Activated B cell treated with CpG ODN at 0.5 μM for 24 hours (primary cell): ENCODE measurements at regions of chr1 and their contacts with region 1.

Region 1: GRCh38 chr1:235866913-235867845 is 473 bp upstream of the LYST start:
- DNase-seq: peak; percentile 99
- ATAC-seq: peak; percentile 71
- H3K4me3 Mint-ChIP-seq: peak overlapping the region; percentile 98
- H3K27ac Mint-ChIP-seq: peak overlapping the region; percentile 99
- H3K4me1 Mint-ChIP-seq: peaks cover 64% of the 10 kb centered on the region
- H3K27me3 Mint-ChIP-seq: no peaks in the 10 kb centered on the region
- CTCF ChIP-seq: no peak

Region 2: DNA sequence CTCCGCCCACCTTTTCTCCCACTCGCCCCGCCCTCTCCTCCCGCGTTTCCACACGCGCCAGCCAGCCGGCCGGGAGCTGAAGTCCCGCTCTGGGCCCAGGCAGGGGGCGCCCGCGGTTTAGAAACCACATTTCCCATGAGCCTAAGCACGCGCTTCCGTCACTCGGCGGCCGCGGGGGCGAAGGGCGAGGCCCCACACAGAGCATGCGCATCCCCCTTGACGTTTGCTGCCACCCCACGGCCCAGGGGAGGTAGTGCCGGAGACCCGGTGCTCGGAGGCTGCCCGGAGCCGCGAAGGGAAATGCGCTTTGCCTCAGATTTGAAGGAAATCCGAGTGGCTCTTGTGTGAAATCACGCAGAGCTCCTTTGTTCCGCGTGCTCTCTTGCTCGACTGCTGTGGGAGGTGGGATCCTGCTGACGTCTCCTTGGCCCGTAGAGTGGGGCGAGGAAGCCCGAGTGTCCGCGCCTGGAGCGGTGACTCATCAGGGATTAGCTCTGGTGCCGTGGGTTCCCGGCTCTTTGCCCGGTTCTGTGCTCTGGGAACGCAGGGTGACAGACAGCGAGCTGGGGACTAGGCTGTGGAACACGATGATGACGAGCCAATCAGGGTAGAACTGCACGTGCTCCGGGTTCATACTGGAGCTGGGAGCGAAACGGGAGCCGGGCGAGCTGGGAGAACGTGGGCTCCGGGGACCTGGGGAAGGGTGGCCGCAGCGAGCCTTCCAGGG is 362.5 kb before region 1 on chr1:
- CTCF ChIA-PET with region 1: no interaction called
- POLR2A ChIA-PET with region 1: interaction called, 4 read pairs
- intact Hi-C with region 1: loop called (anchors 1 kb)
- DNase-seq: peak; percentile 96
- ATAC-seq: peak; percentile 81
- H3K4me3 Mint-ChIP-seq: peak overlapping the region; percentile 96
- H3K27ac Mint-ChIP-seq: peak overlapping the region; percentile 95
- H3K4me1 Mint-ChIP-seq: peaks cover 20% of the 10 kb centered on the region
- H3K27me3 Mint-ChIP-seq: no peaks in the 10 kb centered on the region
- CTCF ChIP-seq: no peak

Region 3: DNA sequence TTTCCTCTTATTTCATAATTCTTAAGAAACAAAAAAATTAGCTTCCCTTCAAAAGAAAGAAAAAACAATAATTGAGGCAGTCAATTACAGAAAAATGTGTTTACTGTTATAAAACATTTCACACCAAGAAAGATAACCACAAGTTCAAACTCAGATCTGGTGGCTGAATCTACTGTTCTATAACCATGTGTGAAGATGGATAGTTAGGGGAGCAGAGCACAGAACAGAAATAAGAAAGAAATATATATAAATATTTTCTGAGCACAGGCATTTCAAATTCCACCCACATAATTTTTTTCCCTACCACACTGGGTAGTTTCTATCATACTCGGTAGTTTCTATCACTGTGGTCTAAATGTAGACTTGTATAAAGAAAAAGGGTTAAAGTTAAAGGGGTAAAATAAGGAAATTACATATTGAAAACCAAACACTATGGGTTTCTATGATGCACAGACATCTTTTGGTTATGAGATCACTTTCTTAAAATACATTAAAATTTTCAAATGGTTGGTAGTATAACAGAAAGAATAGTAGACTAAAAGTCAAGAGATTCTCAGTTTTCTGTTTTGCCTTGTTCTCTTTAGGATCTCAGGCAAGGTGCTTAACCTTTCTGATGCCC is 11.3 kb before region 1 on chr1:
- CTCF ChIA-PET with region 1: interaction called, 7 read pairs
- POLR2A ChIA-PET with region 1: interaction called, 23 read pairs
- intact Hi-C with region 1: loop called (anchors 1 kb)
- DNase-seq: no peak
- ATAC-seq: peak; percentile 40
- H3K4me3 Mint-ChIP-seq: no peak overlapping the region
- H3K27ac Mint-ChIP-seq: peak overlapping the region; percentile 54
- H3K4me1 Mint-ChIP-seq: peaks cover 56% of the 10 kb centered on the region
- H3K27me3 Mint-ChIP-seq: no peaks in the 10 kb centered on the region
- CTCF ChIP-seq: no peak

Region 4: DNA sequence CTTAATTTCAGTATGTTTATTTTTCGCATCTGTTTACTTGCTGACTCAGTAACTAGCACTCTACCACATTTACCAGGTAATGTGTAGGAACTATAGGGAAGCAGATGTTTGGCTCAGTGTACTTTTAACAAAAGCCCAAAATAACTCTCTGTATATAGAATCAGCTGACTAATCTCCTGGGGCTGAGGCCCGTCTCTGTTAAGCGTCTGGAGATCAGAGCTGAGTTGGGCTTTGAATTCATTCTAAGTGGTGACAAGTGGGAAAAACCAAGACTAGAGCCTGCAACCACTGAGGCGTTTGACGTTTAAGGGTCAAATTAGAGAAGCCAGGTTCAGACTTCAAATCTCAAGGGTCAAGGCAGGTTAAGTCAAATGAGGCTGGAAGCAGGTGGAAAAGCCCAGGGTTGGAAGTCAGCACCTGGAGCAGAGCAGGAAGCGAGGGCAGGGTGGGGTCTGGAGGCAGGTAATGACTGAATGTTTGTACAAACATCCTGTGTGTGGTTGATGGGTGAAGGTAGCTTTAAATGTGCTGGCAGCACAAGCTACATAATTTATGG is 56.4 kb after region 1 on chr1:
- CTCF ChIA-PET with region 1: interaction called, 6 read pairs
- POLR2A ChIA-PET with region 1: interaction called, 50 read pairs
- intact Hi-C with region 1: loop called (anchors 1 kb)
- DNase-seq: no peak
- ATAC-seq: peak; percentile 85
- H3K4me3 Mint-ChIP-seq: peak overlapping the region; percentile 56
- H3K27ac Mint-ChIP-seq: peak overlapping the region; percentile 78
- H3K4me1 Mint-ChIP-seq: peaks cover 59% of the 10 kb centered on the region
- H3K27me3 Mint-ChIP-seq: no peaks in the 10 kb centered on the region
- CTCF ChIP-seq: no peak

Region 5: DNA sequence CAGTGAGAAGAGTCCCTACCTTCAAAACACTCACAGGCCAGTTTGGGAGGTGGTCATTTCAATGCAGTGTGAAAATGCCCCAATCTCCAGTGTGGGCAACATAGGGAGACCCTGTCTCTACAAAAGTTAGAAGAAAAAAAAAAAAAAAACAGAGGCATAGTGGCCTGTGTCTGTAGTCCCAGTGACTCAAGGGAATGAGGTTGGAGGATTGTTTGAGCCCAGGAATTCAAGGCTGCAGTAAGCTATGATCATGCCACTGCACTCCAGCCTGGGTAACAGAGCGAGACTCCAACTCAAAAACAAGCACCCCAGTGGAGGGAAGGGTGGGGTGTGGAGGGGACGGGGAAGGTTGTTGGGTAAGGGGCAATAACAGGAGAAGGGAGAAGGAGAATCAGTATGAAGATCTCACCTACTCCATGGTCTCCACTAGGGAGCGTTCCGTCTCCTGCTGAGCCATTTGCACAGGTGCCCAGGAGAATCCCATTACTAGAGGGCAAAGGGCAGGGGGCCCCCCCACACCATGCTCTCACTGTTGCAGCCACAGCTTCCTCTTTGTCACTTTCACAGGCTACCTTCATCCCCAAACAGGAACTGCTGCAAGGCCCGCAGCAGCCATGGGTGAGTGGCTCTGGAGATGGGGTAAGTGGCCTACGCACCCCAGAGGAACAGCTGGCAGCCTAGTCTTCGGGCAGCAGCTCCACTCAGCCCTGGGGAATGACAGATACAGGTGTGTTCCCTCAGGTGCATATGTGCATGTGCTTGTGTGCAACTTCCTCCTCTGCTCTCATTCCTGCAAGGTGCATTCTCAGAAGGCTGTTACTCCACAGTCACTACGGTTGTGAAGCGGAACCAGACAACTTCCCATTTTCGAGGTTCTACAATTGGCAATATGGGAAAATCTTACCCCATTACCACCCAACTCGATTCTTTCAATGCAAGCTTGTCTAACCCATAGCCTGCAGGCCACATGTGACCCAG is 87.4 kb after region 1 on chr1:
- CTCF ChIA-PET with region 1: interaction called, 5 read pairs
- POLR2A ChIA-PET with region 1: interaction called, 40 read pairs
- intact Hi-C with region 1: loop called (anchors 1 kb)
- DNase-seq: peak; percentile 70
- ATAC-seq: peak; percentile 95
- H3K4me3 Mint-ChIP-seq: peak overlapping the region; percentile 58
- H3K27ac Mint-ChIP-seq: peak overlapping the region; percentile 81
- H3K4me1 Mint-ChIP-seq: peaks cover 69% of the 10 kb centered on the region
- H3K27me3 Mint-ChIP-seq: no peaks in the 10 kb centered on the region
- CTCF ChIP-seq: no peak

Region 6: GRCh38 chr1:236064674-236065508 is 197.7 kb after region 1 on chr1 and contains the start of gene NID1:
- CTCF ChIA-PET with region 1: no interaction called
- POLR2A ChIA-PET with region 1: interaction called, 3 read pairs
- intact Hi-C with region 1: loop called (anchors 2 kb)
- DNase-seq: peak; percentile 38
- ATAC-seq: peak; percentile 18
- H3K4me3 Mint-ChIP-seq: peak within 1 kb of the TSS; percentile 70
- H3K27ac Mint-ChIP-seq: no peak within 1 kb of the TSS
- H3K4me1 Mint-ChIP-seq: peaks cover 33% of the 10 kb centered on the region
- H3K27me3 Mint-ChIP-seq: peaks cover 25% of the 10 kb centered on the region
- CTCF ChIP-seq: no peak
- total RNA-seq, gene NID1: 0.04 and 0.10 TPM in 2 replicates

Region 7: DNA sequence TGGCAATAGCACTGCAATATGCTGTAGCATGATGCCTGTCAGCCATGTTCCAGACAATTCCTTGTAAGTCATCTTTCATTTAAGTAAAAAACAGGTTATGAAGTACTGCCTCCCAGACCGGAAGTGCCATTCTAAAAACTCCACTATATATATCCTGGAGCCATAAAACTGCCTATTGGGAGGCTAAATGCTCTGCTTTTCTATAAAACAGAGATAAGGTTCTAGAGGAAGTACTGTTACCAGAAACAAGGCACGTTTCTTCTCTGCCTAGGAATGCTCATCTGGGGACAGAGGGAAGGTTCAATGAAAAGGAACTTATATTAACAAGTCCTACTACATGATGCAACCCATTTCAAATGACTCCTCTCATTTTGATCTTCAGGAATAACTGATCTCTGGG is 342.0 kb after region 1 on chr1:
- CTCF ChIA-PET with region 1: no interaction called
- POLR2A ChIA-PET with region 1: no interaction called
- intact Hi-C with region 1: no loop called
- DNase-seq: no peak
- ATAC-seq: no peak
- H3K4me3 Mint-ChIP-seq: no peak overlapping the region
- H3K27ac Mint-ChIP-seq: no peak overlapping the region
- H3K4me1 Mint-ChIP-seq: no peaks in the 10 kb centered on the region
- H3K27me3 Mint-ChIP-seq: no peaks in the 10 kb centered on the region
- CTCF ChIP-seq: no peak

Region 8: DNA sequence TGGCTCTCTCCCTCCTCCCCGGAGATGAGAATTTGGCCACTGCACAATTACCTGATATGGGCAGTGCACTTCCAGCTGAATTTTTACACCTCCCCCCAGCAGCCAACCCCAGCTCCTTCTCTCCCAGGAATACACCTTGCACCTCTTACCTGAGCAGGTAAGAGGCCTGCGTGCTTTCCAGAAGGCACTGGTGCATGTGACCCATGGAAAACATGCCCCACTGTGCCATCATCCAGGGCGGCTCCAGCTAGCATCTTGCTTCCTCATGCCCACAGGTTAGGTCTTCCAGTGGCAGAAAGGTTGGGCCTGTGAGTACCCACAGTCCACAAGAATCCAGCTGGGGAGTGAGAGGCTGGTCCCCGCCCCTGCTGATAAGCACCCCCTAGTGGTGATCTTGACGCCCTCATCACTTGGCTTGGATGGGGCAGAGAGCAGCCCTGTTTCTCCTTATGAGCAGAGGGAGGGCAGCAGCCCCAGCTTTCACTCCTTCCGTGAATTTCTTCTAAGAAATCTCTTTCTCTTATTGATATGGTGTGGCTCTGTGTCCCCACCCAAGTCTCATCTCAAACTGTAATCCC is 584.7 kb after region 1 on chr1:
- CTCF ChIA-PET with region 1: no interaction called
- POLR2A ChIA-PET with region 1: interaction called, 10 read pairs
- intact Hi-C with region 1: no loop called
- DNase-seq: no peak
- ATAC-seq: no peak
- H3K4me3 Mint-ChIP-seq: no peak overlapping the region
- H3K27ac Mint-ChIP-seq: no peak overlapping the region
- H3K4me1 Mint-ChIP-seq: no peaks in the 10 kb centered on the region
- H3K27me3 Mint-ChIP-seq: peaks cover 6% of the 10 kb centered on the region
- CTCF ChIP-seq: no peak